Activated B cell treated with CpG ODN at 0.5 μM for 24 hours (primary cell): ENCODE measurements at regions of chr11 and their contacts with region 1.

Region 1: GRCh38 chr11:6771926-6772893 is at the start of gene OR2AG2:
- DNase-seq: no peak
- ATAC-seq: peak; percentile 98
- H3K4me3 Mint-ChIP-seq: no peak within 1 kb of the TSS
- H3K27ac Mint-ChIP-seq: peak within 1 kb of the TSS; percentile 76
- H3K4me1 Mint-ChIP-seq: peaks cover 12% of the 10 kb centered on the region
- H3K27me3 Mint-ChIP-seq: no peaks in the 10 kb centered on the region
- CTCF ChIP-seq: no peak
- total RNA-seq, gene OR2AG2: 0.07 TPM in 1 of 2 replicates, not detected in the other

Region 2: DNA sequence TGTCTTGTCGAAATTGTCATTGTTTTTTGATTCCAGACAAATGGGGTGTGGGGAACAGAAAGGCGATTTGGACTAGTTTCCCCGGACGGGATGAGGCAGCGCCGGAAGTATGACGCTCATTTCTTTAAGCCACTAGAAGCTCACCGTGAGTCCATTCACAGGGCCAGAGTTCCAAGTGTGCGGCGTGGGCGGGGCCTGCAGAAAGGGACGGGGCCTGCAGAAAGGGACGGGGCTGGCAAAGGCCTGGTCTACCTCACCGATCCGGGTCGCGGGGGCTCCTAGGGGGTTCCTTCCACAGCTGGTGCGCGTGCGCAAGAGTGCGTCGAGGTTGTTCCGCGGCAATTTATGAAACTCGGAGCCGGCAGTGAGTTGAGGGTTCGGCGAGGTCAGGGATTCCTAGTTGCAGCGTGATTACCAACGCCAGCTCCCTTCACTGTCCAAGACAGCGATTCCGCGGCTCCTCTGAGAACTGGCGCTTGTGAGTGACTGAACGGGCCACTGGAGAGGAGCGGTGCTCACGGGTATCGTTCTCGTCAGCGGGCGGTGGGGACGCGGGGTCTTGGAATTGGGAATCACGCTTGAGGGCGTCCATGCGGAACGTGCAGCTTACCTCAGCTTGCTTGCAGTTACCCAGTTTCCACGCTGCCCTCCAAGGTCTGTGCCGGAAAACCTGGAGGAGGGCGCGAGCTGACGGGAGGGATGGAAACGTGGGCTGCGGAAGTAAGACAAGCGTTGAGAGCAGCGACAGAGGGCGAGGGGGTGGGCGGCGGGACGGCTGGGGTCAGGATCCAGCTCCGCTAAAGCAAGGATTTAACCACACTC is 154.2 kb after region 1 on chr11 and contains the start of gene ZNF215:
- CTCF ChIA-PET with region 1: no interaction called
- POLR2A ChIA-PET with region 1: no interaction called
- intact Hi-C with region 1: loop called (anchors 5 kb)
- DNase-seq: peak; percentile 43
- ATAC-seq: peak; percentile 76
- H3K4me3 Mint-ChIP-seq: peak within 1 kb of the TSS; percentile 93
- H3K27ac Mint-ChIP-seq: peak within 1 kb of the TSS; percentile 81
- H3K4me1 Mint-ChIP-seq: peaks cover 19% of the 10 kb centered on the region
- H3K27me3 Mint-ChIP-seq: no peaks in the 10 kb centered on the region
- CTCF ChIP-seq: no peak
- total RNA-seq, gene ZNF215: 5.3 and 5.4 TPM in 2 replicates